ENCODE measurements at regions of chr3 and their contacts with region 1.

Region 1: DNA sequence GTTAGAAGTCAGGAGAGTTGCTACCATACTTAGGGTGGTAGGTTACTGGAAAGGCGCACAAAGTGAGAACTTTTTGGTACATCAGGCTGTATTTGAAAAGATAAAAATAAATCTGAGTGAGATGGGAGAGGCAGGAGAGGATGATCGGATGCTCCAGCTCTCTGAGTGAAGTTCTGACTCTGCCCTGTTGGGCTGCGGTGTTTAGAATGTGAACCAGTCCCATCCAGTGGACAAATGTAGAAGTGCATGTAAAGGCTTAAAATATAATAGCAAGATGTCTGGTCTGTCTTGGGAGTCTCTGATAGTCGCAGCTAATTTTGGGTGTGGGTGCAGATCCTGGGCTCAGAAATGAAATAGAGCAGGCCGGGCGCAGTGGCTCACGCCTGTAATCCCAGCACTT is 30.4 kb downstream of the ACKR2 start:
- DNase-seq: peak; percentile 69
- H3K4me3 Mint-ChIP-seq: no peak overlapping the region
- H3K27ac Mint-ChIP-seq: no peak overlapping the region
- H3K4me1 Mint-ChIP-seq: no peaks in the 10 kb centered on the region
- H3K27me3 Mint-ChIP-seq: no peaks in the 10 kb centered on the region
- CTCF ChIP-seq: peak; percentile 77

Region 2: DNA sequence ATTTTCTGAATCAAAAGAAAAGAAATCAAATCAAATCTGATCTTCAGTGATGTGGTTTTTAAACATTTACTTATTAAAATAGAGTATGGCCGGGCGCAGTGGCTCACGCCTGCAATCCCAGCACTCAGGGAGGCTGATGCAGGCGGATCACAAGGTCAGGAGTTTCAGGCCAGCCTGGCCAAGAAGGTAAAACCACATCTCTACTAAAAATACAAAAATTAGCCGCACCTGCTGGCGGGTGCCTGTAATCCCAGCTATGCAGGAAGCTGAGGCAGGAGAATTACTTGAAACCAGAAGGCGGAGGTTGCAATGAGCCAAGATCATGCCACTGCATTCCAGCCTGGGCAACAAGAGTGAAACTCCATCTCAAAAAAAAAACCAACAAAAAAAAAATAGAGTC is 1046.8 kb before region 1 on chr3:
- CTCF ChIA-PET with region 1: no interaction called
- POLR2A ChIA-PET with region 1: no interaction called
- intact Hi-C with region 1: no loop called
- DNase-seq: no peak
- H3K4me3 Mint-ChIP-seq: no peak overlapping the region
- H3K27ac Mint-ChIP-seq: no peak overlapping the region
- H3K4me1 Mint-ChIP-seq: no peaks in the 10 kb centered on the region
- H3K27me3 Mint-ChIP-seq: no peaks in the 10 kb centered on the region
- CTCF ChIP-seq: no peak

Region 3: GRCh38 chr3:42804106-42804830 is 35.3 kb before region 1 on chr3 and contains the start of gene HIGD1A:
- CTCF ChIA-PET with region 1: no interaction called
- POLR2A ChIA-PET with region 1: interaction called, 5 read pairs
- intact Hi-C with region 1: loop called (anchors 5 kb)
- DNase-seq: peak; percentile 97
- H3K4me3 Mint-ChIP-seq: peak within 1 kb of the TSS; percentile 92
- H3K27ac Mint-ChIP-seq: peak within 1 kb of the TSS; percentile 90
- H3K4me1 Mint-ChIP-seq: peaks cover 22% of the 10 kb centered on the region
- H3K27me3 Mint-ChIP-seq: no peaks in the 10 kb centered on the region
- CTCF ChIP-seq: no peak
- total RNA-seq, gene HIGD1A: 140 and 161 TPM in 2 replicates

Region 4: DNA sequence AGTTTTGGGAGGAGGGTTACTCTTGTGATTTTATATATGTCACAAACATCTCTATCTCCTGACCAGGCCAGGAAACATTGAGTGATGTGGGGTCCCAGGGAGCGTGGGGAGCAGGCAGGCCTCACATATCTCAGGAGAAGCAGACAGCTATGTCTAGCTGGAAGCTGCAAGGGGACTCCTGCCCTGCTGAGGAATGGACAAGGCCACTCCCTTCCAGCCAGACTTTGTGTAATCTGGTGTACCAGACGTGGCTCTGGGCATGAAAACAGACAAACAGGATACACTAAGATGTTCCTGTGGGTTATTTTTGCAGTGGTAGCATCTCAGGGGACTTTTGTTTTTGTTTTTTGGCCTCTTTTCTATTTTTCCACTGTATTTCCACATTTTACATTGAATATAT is 12.8 kb after region 1 on chr3:
- CTCF ChIA-PET with region 1: interaction called, 16 read pairs
- POLR2A ChIA-PET with region 1: no interaction called
- intact Hi-C with region 1: no loop called
- DNase-seq: no peak
- H3K4me3 Mint-ChIP-seq: no peak overlapping the region
- H3K27ac Mint-ChIP-seq: peak overlapping the region; percentile 82
- H3K4me1 Mint-ChIP-seq: peaks cover 18% of the 10 kb centered on the region
- H3K27me3 Mint-ChIP-seq: no peaks in the 10 kb centered on the region
- CTCF ChIP-seq: no peak

Region 5: DNA sequence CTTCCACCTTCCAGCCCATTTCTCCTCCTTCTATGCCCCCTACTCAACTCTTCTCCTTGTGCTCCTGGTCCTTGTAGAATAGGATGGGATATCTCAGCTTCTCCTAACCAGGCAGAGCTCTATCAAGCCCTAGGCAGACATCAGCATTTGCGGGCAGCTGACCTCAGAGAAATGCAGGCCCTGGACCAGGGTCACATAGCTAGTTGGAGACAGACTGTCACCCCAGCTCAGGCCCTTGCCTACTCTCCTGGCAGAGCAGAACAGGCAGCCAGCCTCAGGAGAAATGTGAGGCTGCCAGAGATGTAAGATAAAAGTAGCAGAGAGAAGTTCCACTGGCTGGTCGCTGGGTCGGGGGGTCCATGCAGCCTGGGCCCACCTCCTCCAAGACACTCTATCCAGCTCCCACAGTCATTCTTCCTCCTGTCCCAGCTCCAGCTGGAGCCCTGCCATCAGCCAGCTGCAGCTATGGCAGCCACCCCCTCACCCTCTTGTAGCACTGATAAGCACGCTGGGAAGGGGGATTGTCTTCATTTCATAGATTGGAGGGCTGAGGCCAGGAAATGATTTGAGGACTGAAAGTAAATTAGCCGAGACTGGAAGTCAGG is 32.1 kb after region 1 on chr3:
- CTCF ChIA-PET with region 1: interaction called, 10 read pairs
- POLR2A ChIA-PET with region 1: no interaction called
- intact Hi-C with region 1: no loop called
- DNase-seq: no peak
- H3K4me3 Mint-ChIP-seq: no peak overlapping the region
- H3K27ac Mint-ChIP-seq: no peak overlapping the region
- H3K4me1 Mint-ChIP-seq: peaks cover 7% of the 10 kb centered on the region
- H3K27me3 Mint-ChIP-seq: peaks cover 23% of the 10 kb centered on the region
- CTCF ChIP-seq: no peak

Region 6: DNA sequence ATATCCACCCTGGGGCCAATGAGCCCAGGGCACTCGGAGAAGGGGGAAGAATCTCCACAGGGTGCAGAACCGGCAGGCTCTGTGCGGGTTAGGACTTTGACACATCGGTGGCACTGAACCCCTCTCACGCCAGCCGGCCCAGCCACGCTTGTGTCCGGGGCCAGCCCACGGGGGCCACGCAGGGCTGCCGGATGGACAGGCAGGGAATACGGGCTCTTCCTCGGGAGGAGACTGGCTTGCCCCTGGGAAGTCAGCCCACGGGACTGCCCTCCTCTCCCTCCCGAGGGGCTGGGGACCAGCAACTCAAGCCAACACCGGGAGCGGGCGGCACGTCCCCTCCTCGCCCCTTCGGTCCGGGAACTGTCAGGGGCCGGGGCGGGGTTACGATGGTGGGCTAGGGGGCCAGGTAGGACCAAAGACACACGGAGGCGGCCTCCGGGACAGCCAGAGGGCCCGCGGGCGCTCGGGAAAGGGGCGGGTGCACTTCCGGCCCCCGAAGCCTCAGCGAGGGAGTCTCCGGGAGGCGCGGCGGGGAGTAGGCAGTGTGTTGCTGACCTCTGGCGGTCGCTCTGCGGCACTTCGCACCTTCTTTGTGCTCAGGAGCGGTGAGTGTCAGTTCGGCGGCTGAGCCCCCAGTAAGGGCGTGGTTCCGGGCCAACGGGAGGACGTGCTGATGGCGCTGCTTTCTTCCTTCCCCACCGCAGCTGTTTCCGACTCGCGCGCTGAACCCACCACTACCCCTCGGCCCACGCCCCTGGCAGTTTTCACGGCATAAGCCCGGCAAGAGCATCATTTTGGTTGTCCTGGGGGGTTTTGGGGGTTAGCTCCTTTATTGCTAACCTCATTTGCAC is 41.2 kb after region 1 on chr3:
- CTCF ChIA-PET with region 1: interaction called, 14 read pairs
- POLR2A ChIA-PET with region 1: no interaction called
- intact Hi-C with region 1: no loop called
- DNase-seq: peak; percentile 74
- H3K4me3 Mint-ChIP-seq: peak overlapping the region; percentile 63
- H3K27ac Mint-ChIP-seq: peak overlapping the region; percentile 21
- H3K4me1 Mint-ChIP-seq: peaks cover 6% of the 10 kb centered on the region
- H3K27me3 Mint-ChIP-seq: peaks cover 12% of the 10 kb centered on the region
- CTCF ChIP-seq: peak; percentile 88